ENCODE measurements at regions of chr18 and their contacts with region 1.

Region 1: GRCh38 chr18:1526991-1527390 is 622.3 kb downstream of the ADCYAP1 start:
- DNase-seq: no peak
- H3K4me3 ChIP-seq: no peak overlapping the region
- H3K27ac ChIP-seq: no peak overlapping the region
- H3K4me1 ChIP-seq: no peaks in the 10 kb centered on the region
- H3K27me3 ChIP-seq: no peaks in the 10 kb centered on the region
- CTCF ChIP-seq: no peak
- EP300 ChIP-seq: no peak
- POLR2A ChIP-seq: no peak

Region 2: DNA sequence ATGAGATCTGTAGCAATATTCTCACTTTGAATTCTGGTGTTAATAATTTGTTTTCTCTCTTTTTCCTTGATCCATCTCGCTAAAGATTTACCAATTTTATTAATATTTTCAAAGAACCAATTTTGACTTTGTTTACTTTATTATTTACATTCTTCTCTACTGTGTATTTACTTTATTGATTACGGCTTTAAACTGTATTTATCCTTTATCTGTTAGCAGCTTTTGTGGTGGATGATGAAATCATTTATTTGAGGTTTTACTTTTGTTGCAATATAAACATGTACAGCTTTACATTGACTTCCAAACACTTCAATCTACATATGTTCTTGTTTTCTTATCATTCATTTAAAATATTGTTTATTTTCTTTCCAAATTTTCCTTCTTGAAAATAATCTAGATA is 97.6 kb after region 1 on chr18:
- in situ Hi-C with region 1: no loop called
- intact Hi-C with region 1: no loop called
- DNase-seq: no peak
- H3K4me3 ChIP-seq: no peak overlapping the region
- H3K27ac ChIP-seq: no peak overlapping the region
- H3K4me1 ChIP-seq: no peaks in the 10 kb centered on the region
- H3K27me3 ChIP-seq: no peaks in the 10 kb centered on the region
- CTCF ChIP-seq: no peak
- EP300 ChIP-seq: no peak
- POLR2A ChIP-seq: no peak

Region 3: GRCh38 chr18:1676387-1676786 is 149.4 kb after region 1 on chr18:
- in situ Hi-C with region 1: loop called in 1 of 4 experiments (anchors 25 kb)
- intact Hi-C with region 1: no loop called
- DNase-seq: no peak
- H3K4me3 ChIP-seq: no peak overlapping the region
- H3K27ac ChIP-seq: no peak overlapping the region
- H3K4me1 ChIP-seq: no peaks in the 10 kb centered on the region
- H3K27me3 ChIP-seq: no peaks in the 10 kb centered on the region
- CTCF ChIP-seq: no peak
- EP300 ChIP-seq: no peak
- POLR2A ChIP-seq: no peak

Measured in transverse colon (tissue), 4 donors.